ENCODE measurements at regions of chr9 and their contacts with region 1.

Region 1: DNA sequence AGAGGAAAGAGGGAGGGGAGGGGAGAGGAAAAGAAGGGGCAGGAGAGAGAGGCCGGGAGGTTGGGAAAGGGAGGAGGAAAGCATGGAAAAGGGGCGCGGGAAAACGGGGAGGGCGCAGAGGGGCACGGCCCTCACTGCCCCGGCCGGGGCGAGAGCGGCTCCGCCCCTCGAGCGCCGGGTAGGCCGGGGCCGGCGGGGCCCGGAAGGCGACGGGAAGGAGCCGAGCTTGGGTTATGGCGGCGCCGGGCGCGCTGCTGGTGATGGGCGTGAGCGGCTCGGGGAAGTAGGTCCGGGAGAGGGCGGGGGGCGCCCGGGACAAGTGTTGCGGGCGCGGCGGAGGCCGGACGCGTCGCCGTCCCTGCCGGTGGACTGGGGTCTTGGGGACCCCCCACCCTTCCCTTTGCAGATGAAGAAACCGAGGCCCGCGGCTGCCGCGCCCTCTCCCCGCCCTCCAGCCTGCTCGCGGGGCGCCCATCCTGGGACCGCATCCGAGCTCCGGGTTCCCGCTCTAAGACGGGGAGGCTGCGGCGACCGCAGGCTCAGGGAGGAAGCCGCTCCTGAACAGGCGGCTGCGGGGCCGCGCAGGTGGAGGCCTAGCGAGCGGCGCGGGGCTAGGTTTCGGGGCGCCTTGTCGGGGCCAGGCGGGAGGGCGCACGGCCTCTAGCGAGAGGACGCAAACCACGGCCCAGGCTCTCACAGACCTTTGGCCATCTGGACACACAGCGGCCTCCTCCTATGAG is at the start of gene IDNK:
- DNase-seq: peak; percentile 34 to 77 (median 60)
- ATAC-seq: peak; percentile 88 to 91
- H3K4me3 Mint-ChIP-seq: peak within 1 kb of the TSS; percentile 91 to 96 (median 94)
- H3K27ac Mint-ChIP-seq: peak within 1 kb of the TSS; percentile 89 to 98 (median 96)
- H3K4me1 Mint-ChIP-seq: peaks cover 23 to 41% (median 37%) of the 10 kb centered on the region in 4 donors
- H3K27me3 Mint-ChIP-seq: no peaks in the 10 kb centered on the region
- polyA plus RNA-seq, gene IDNK: 15.8 to 19.3 (median 19.1) TPM

Region 2: GRCh38 chr9:83511051-83511450 is 112.1 kb before region 1 on chr9:
- POLR2A ChIA-PET with region 1: no interaction called
- DNase-seq: no peak
- ATAC-seq: no peak
- H3K4me3 Mint-ChIP-seq: no peak overlapping the region
- H3K27ac Mint-ChIP-seq: peak overlapping the region in 1 of 10 donors; percentile 13
- H3K4me1 Mint-ChIP-seq: peaks cover 7 to 19% (median 15%) of the 10 kb centered on the region in 4 donors
- H3K27me3 Mint-ChIP-seq: peaks cover 0 to 7% (median 3%) of the 10 kb centered on the region in 5 donors

Region 3: GRCh38 chr9:83649080-83649479 is 26.0 kb after region 1 on chr9:
- POLR2A ChIA-PET with region 1: interaction called, 11 read pairs
- DNase-seq: peak; percentile 48 to 85 (median 72)
- ATAC-seq: peak; percentile 92 to 93
- H3K4me3 Mint-ChIP-seq: no peak overlapping the region
- H3K27ac Mint-ChIP-seq: peak overlapping the region in 6 of 10 donors; percentile 29 to 79 (median 56)
- H3K4me1 Mint-ChIP-seq: peaks cover 0 to 6% (median 2%) of the 10 kb centered on the region in 4 donors
- H3K27me3 Mint-ChIP-seq: no peaks in the 10 kb centered on the region

Region 4: GRCh38 chr9:83707768-83708514 is 84.8 kb after region 1 on chr9 and contains the start of gene UBQLN1:
- POLR2A ChIA-PET with region 1: interaction called, 25 read pairs
- DNase-seq: peak; percentile 83 to 98 (median 92)
- ATAC-seq: peak; percentile 82 to 83
- H3K4me3 Mint-ChIP-seq: peak within 1 kb of the TSS; percentile 85 to 100 (median 94)
- H3K27ac Mint-ChIP-seq: peak within 1 kb of the TSS; percentile 96 to 100 (median 99)
- H3K4me1 Mint-ChIP-seq: peaks cover 26 to 50% (median 42%) of the 10 kb centered on the region in 4 donors
- H3K27me3 Mint-ChIP-seq: no peaks in the 10 kb centered on the region
- polyA plus RNA-seq, gene UBQLN1: 65.4 to 70.8 (median 67.6) TPM

Region 5: GRCh38 chr9:83920927-83921707 is 298.0 kb after region 1 on chr9 and contains the start of gene KIF27:
- POLR2A ChIA-PET with region 1: interaction called, 13 read pairs
- DNase-seq: peak; percentile 89 to 98 (median 94)
- ATAC-seq: peak; percentile 78 to 83
- H3K4me3 Mint-ChIP-seq: peak within 1 kb of the TSS; percentile 88 to 96 (median 92)
- H3K27ac Mint-ChIP-seq: peak within 1 kb of the TSS; percentile 81 to 99 (median 98)
- H3K4me1 Mint-ChIP-seq: peaks cover 5 to 17% (median 14%) of the 10 kb centered on the region in 4 donors
- H3K27me3 Mint-ChIP-seq: no peaks in the 10 kb centered on the region
- polyA plus RNA-seq, gene KIF27: 1.1 to 2.1 (median 1.3) TPM

Region 6: DNA sequence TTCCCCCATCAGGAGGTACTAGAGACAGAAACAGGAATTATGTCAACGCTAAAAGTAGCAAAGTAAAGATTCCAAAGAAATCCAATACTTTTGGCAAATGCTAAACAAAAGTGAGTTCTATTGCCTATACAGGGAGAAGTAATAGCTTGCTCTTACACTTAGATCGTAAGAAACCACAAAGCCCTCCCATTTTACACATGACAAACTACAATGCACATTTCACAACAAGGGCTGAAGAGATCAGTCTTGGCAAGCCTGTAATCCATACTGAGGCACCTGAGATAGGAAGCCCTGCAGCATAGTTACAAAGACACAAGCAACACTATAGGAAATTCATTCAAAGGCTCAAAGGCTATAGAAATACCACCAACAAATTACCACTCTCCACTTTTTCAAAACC is 349.2 kb after region 1 on chr9:
- POLR2A ChIA-PET with region 1: no interaction called
- DNase-seq: no peak
- ATAC-seq: peak in 1 of 2 donors; percentile 12
- H3K4me3 Mint-ChIP-seq: no peak overlapping the region
- H3K27ac Mint-ChIP-seq: peak overlapping the region in 7 of 10 donors; percentile 23 to 77 (median 57)
- H3K4me1 Mint-ChIP-seq: peaks cover 30 to 68% (median 53%) of the 10 kb centered on the region in 4 donors
- H3K27me3 Mint-ChIP-seq: no peaks in the 10 kb centered on the region

Measured in naive thymus-derived CD8-positive, alpha-beta T cell (primary cell).